ENCODE measurements at regions of chr17 and their contacts with region 1.

Region 1: GRCh38 chr17:42798383-42799380 is at the starts of genes CNTD1 and COA3:
- H3K4me3 ChIP-seq: peak within 1 kb of the TSS; percentile 77
- H3K27ac ChIP-seq: peak within 1 kb of the TSS; percentile 68; the same call in 1 of the 2 replicates
- H3K4me1 ChIP-seq: peaks cover 15% of the 10 kb centered on the region
- CTCF ChIP-seq: peak; percentile 42; the same call in 1 of the 2 replicates

Region 2: GRCh38 chr17:42773290-42774035 is 25.2 kb before region 1 on chr17 and contains the start of gene VPS25:
- CTCF ChIA-PET with region 1: no interaction called
- POLR2A ChIA-PET with region 1: interaction called, 12 read pairs
- H3K4me3 ChIP-seq: peak within 1 kb of the TSS; percentile 94
- H3K27ac ChIP-seq: peak within 1 kb of the TSS; percentile 64
- H3K4me1 ChIP-seq: peaks cover 4% of the 10 kb centered on the region; the same call in 1 of the 2 replicates
- CTCF ChIP-seq: peak; percentile 79

Region 3: DNA sequence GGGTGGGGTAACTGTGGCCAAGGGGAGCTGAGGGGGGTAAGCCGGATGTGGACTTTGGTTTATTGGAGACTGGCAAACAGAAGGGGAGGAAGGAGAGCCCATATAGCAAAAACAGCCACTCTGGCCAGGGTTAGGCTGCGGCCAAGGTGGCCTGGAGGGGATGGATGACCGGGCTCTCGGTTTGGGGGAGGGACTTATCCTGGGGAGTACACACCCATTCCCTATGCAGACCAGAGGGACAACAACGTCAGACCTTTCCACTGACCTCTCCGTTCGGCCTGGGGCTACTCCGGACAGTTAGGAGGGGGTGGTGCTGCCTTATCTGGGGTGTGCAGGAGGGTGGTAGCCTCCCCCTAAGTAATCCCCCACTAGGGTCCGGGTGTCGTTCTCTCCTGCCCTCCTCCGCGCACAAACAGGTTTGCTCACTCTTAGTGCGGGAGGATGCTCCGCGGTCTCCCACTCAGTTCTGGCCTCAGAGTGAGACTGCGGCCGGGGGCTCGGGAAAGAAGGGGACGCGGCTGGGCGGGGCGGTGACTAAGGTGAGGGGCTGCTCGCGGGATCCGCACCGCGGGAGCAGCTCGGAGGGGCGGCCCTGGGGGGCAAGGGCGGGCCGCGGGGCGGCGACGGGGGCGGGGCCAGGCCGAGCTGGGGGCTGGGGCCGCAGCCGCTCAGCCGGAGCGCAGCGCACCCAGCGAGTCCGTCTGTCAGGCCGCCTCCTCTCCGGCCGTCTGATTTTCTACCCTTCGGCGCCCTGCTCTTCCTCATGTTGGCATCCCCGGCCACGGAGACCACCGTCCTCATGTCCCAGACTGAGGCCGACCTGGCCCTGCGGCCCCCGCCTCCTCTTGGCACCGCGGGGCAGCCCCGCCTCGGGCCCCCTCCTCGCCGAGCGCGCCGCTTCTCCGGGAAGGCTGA is 18.5 kb before region 1 on chr17 and contains the start of gene WNK4:
- CTCF ChIA-PET with region 1: no interaction called
- POLR2A ChIA-PET with region 1: interaction called, 13 read pairs
- H3K4me3 ChIP-seq: peak within 1 kb of the TSS; percentile 45
- H3K27ac ChIP-seq: peak within 1 kb of the TSS; percentile 11; the same call in 1 of the 2 replicates
- H3K4me1 ChIP-seq: peaks cover 5% of the 10 kb centered on the region; the same call in 1 of the 2 replicates
- CTCF ChIP-seq: no peak

Region 4: GRCh38 chr17:42855048-42855596 is 56.4 kb after region 1 on chr17:
- CTCF ChIA-PET with region 1: no interaction called
- POLR2A ChIA-PET with region 1: no interaction called
- H3K4me3 ChIP-seq: no peak overlapping the region
- H3K27ac ChIP-seq: no peak overlapping the region
- H3K4me1 ChIP-seq: no peaks in the 10 kb centered on the region
- CTCF ChIP-seq: no peak

Region 5: GRCh38 chr17:43211480-43212402 is 413.1 kb after region 1 on chr17 and contains the start of gene TMEM106A:
- CTCF ChIA-PET with region 1: no interaction called
- POLR2A ChIA-PET with region 1: no interaction called
- H3K4me3 ChIP-seq: no peak within 1 kb of the TSS
- H3K27ac ChIP-seq: no peak within 1 kb of the TSS
- H3K4me1 ChIP-seq: no peaks in the 10 kb centered on the region
- CTCF ChIP-seq: no peak

Measured in HEK293 (cell line).